ENCODE measurements at regions of chr1 and their contacts with region 1.

Region 1: GRCh38 chr1:206684478-206685333 is at the start of gene MAPKAPK2:
- DNase-seq: peak; percentile 52 to 80 (median 71)
- ATAC-seq: peak; percentile 85
- H3K4me3 ChIP-seq: peak within 1 kb of the TSS; percentile 66
- H3K4me3 Mint-ChIP-seq: peak within 1 kb of the TSS; percentile 92 to 100 (median 96)
- H3K27ac ChIP-seq: peak within 1 kb of the TSS; percentile 90
- H3K27ac Mint-ChIP-seq: peak within 1 kb of the TSS; percentile 90 to 98 (median 95)
- H3K4me1 ChIP-seq: peaks cover 12 to 21% of the 10 kb centered on the region in 2 donors
- H3K4me1 Mint-ChIP-seq: peaks cover 23 to 49% (median 38%) of the 10 kb centered on the region in 7 donors
- H3K27me3 ChIP-seq: no peaks in the 10 kb centered on the region
- H3K27me3 Mint-ChIP-seq: peaks cover 0 to 17% (median 0%) of the 10 kb centered on the region in 5 donors
- total RNA-seq, gene MAPKAPK2: 49.6 to 123 (median 80.5) TPM

Region 2: GRCh38 chr1:206469933-206470691 is 214.6 kb before region 1 on chr1 and contains the start of gene IKBKE:
- CTCF ChIA-PET with region 1: no interaction called
- POLR2A ChIA-PET with region 1: interaction called, 5 read pairs
- intact Hi-C with region 1: loop called in 1 of 2 experiments (anchors 2 kb)
- DNase-seq: peak in 8 of 9 donors; percentile 37 to 58 (median 44)
- ATAC-seq: peak; percentile 74
- H3K4me3 ChIP-seq: peak within 1 kb of the TSS; percentile 98
- H3K4me3 Mint-ChIP-seq: peak within 1 kb of the TSS; percentile 88 to 95 (median 93)
- H3K27ac ChIP-seq: peak within 1 kb of the TSS; percentile 78
- H3K27ac Mint-ChIP-seq: peak within 1 kb of the TSS; percentile 75 to 97 (median 86)
- H3K4me1 ChIP-seq: peaks cover 64 to 66% of the 10 kb centered on the region in 2 donors
- H3K4me1 Mint-ChIP-seq: peaks cover 55 to 86% (median 78%) of the 10 kb centered on the region in 7 donors
- H3K27me3 ChIP-seq: no peaks in the 10 kb centered on the region
- H3K27me3 Mint-ChIP-seq: no peaks in the 10 kb centered on the region
- total RNA-seq, gene IKBKE: 50.1 to 177 (median 79.1) TPM

Region 3: GRCh38 chr1:206556750-206557635 is 127.7 kb before region 1 on chr1:
- CTCF ChIA-PET with region 1: no interaction called
- POLR2A ChIA-PET with region 1: no interaction called
- intact Hi-C with region 1: loop called in 1 of 2 experiments (anchors 2 kb)
- DNase-seq: peak; percentile 78 to 93 (median 88)
- ATAC-seq: peak; percentile 86
- H3K4me3 ChIP-seq: peak overlapping the region; percentile 90
- H3K4me3 Mint-ChIP-seq: peak overlapping the region; percentile 77 to 99 (median 96)
- H3K27ac ChIP-seq: peak overlapping the region; percentile 90
- H3K27ac Mint-ChIP-seq: peak overlapping the region; percentile 86 to 100 (median 94)
- H3K4me1 ChIP-seq: peaks cover 61 to 66% of the 10 kb centered on the region in 2 donors
- H3K4me1 Mint-ChIP-seq: peaks cover 59 to 75% (median 70%) of the 10 kb centered on the region in 7 donors
- H3K27me3 ChIP-seq: no peaks in the 10 kb centered on the region
- H3K27me3 Mint-ChIP-seq: no peaks in the 10 kb centered on the region

Region 4: DNA sequence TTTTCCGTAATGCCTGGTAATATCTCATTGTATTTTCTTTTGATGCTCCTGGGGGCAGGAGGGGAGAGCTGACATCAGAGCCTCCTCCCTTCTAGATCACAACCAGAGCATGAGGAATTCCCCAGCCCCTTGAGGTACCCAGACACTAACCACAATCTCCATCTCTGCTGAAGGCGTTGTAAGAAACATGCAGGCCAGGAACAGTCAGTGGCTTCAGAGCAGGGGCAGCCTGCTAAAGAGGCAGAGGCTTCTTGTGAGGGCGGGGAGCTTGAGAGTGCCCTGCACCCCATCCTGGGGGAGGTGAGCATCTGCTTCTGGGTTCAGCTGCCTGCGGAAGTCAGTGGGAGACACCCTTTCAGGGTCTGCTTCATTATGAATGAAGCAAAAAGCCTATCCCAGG is 19.0 kb after region 1 on chr1:
- CTCF ChIA-PET with region 1: interaction called, 4 read pairs
- POLR2A ChIA-PET with region 1: interaction called, 9 read pairs
- intact Hi-C with region 1: loop called (anchors 1 kb)
- DNase-seq: peak in 8 of 9 donors; percentile 32 to 84 (median 58)
- ATAC-seq: peak; percentile 89
- H3K4me3 ChIP-seq: no peak overlapping the region
- H3K4me3 Mint-ChIP-seq: peak overlapping the region; percentile 25 to 82 (median 64)
- H3K27ac ChIP-seq: peak overlapping the region; percentile 47
- H3K27ac Mint-ChIP-seq: peak overlapping the region; percentile 15 to 89 (median 77)
- H3K4me1 ChIP-seq: peaks cover 55 to 56% of the 10 kb centered on the region in 2 donors
- H3K4me1 Mint-ChIP-seq: peaks cover 78 to 94% (median 92%) of the 10 kb centered on the region in 7 donors
- H3K27me3 ChIP-seq: no peaks in the 10 kb centered on the region
- H3K27me3 Mint-ChIP-seq: no peaks in the 10 kb centered on the region

Region 5: DNA sequence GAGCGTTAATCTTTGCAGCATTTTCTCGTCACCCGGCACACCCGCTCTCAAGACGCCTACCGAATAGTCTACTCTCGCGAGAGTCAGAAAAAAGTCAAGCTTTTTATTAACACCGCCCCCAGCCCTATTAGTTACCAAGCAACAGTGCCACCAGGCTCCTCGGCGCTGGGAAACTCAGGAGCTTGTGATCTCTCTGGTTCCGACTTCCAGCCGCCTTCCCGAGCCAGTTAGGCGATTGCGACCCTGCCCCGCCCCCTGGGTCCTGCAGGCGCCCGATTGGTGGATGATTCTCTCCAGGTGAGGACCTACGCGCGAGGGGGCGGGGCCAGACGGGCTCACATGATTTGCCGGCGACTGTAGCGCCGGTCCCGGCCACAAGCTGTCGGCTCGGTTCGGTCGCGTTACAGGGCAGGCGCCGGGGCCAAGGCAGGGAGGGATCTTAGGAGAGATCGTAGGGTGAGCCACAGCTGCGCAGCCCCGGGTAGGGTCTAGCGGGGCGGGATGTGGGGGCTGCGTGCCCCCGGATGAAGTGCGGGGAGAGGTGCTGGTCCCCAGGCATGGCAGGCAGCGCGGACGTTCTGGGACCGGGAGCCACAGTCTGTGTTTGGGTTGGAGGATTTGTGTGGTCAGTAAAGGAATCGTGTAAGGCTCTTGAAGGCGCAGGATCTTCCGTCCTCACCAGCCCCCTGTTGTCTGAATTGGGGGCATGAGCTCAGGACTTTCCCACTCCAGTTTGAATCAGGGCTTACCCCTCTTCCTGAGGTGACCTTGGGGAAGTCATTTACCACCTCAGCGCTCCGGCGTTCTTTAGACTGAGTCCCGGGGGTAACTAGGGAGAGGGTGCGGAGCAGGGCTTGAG is 368.4 kb after region 1 on chr1 and contains the start of gene PFKFB2:
- CTCF ChIA-PET with region 1: no interaction called
- POLR2A ChIA-PET with region 1: no interaction called
- intact Hi-C with region 1: loop called in 1 of 2 experiments (anchors 2 kb)
- DNase-seq: peak; percentile 93 to 97 (median 96)
- ATAC-seq: peak; percentile 93
- H3K4me3 ChIP-seq: peak within 1 kb of the TSS; percentile 85
- H3K4me3 Mint-ChIP-seq: peak within 1 kb of the TSS; percentile 95 to 100 (median 98)
- H3K27ac ChIP-seq: peak within 1 kb of the TSS; percentile 72
- H3K27ac Mint-ChIP-seq: peak within 1 kb of the TSS; percentile 86 to 100 (median 97)
- H3K4me1 ChIP-seq: peaks cover 11 to 16% of the 10 kb centered on the region in 2 donors
- H3K4me1 Mint-ChIP-seq: peaks cover 25 to 54% (median 49%) of the 10 kb centered on the region in 7 donors
- H3K27me3 ChIP-seq: no peaks in the 10 kb centered on the region
- H3K27me3 Mint-ChIP-seq: peaks cover 0 to 12% (median 0%) of the 10 kb centered on the region in 5 donors
- total RNA-seq, gene PFKFB2: 2.3 to 4.6 (median 3.8) TPM

Region 6: DNA sequence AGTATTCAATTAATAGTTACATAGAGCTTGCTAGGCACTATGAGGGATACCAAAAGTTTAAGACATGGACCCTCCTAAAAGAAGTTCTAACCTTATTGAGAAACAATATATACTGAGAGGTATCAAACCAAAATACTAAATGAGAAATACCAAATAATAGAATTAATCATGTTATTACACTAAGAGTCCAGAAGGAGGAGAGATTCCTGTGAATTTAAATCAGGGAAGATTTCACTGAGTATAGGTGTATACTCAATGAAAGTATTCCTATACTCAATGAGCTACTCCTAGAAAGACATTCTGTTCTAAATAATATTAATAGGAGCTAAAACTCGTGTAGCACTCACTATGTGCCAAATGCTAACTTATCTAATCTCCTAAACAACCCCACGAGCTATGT is 969.6 kb after region 1 on chr1:
- CTCF ChIA-PET with region 1: no interaction called
- POLR2A ChIA-PET with region 1: no interaction called
- intact Hi-C with region 1: no loop called
- DNase-seq: no peak
- ATAC-seq: no peak
- H3K4me3 ChIP-seq: no peak overlapping the region
- H3K4me3 Mint-ChIP-seq: no peak overlapping the region
- H3K27ac ChIP-seq: no peak overlapping the region
- H3K27ac Mint-ChIP-seq: no peak overlapping the region
- H3K4me1 ChIP-seq: no peaks in the 10 kb centered on the region
- H3K4me1 Mint-ChIP-seq: no peaks in the 10 kb centered on the region
- H3K27me3 ChIP-seq: no peaks in the 10 kb centered on the region
- H3K27me3 Mint-ChIP-seq: peaks cover 0 to 32% (median 9%) of the 10 kb centered on the region in 5 donors